Activated T-helper 2 cell treated with anti-CD3 and anti-CD28 coated beads, Interferon-gamma antibody, Interleukin-2, Interleukin-4, amounts not matched to agents 10 μg/mL and 5 μg/mL and 100 μg/mL, durations not matched to agents 14 hours and 24 hours and 36 hours (primary cell): ENCODE measurements at regions of chr1 and their contacts with region 1.

Region 1: GRCh38 chr1:185566995-185567394 is 167.2 kb upstream of the HMCN1 start:
- DNase-seq: peak; percentile 36
- H3K4me3 Mint-ChIP-seq: no peak overlapping the region
- H3K27ac Mint-ChIP-seq: peak overlapping the region; percentile 75
- H3K4me1 Mint-ChIP-seq: peaks cover 63% of the 10 kb centered on the region
- H3K27me3 Mint-ChIP-seq: no peaks in the 10 kb centered on the region

Region 2: GRCh38 chr1:184881941-184882913 is 684.8 kb before region 1 on chr1:
- intact Hi-C with region 1: loop called (anchors 1 kb)
- DNase-seq: no peak
- H3K4me3 Mint-ChIP-seq: peak overlapping the region; percentile 1
- H3K27ac Mint-ChIP-seq: peak overlapping the region; percentile 90
- H3K4me1 Mint-ChIP-seq: peaks cover 31% of the 10 kb centered on the region
- H3K27me3 Mint-ChIP-seq: peaks cover 5% of the 10 kb centered on the region

Region 3: GRCh38 chr1:185244015-185244747 is 322.8 kb before region 1 on chr1:
- intact Hi-C with region 1: loop called (anchors 5 kb)
- DNase-seq: no peak
- H3K4me3 Mint-ChIP-seq: no peak overlapping the region
- H3K27ac Mint-ChIP-seq: no peak overlapping the region
- H3K4me1 Mint-ChIP-seq: peaks cover 18% of the 10 kb centered on the region
- H3K27me3 Mint-ChIP-seq: no peaks in the 10 kb centered on the region

Region 4: DNA sequence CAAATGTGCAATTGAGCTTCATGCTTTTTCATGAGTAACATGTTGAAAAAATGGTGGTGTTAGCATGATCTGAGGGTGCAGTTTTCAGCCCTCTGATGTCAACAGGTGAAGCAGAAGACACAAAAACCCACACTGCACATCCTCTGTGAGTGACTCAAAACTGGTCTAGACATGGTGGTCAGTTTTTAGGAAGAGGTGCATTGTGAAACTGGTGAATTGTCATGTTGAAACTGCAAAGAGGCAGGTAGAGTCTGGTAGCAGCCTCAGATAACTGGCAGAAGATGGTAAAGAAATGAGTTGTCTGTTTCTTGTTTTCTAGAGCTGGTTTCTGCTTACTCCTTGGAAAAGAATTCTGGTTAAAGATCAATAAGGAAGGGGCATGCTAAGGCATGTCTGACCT is 69.9 kb after region 1 on chr1:
- intact Hi-C with region 1: loop called (anchors 1 kb)
- DNase-seq: peak; percentile 56
- H3K4me3 Mint-ChIP-seq: no peak overlapping the region
- H3K27ac Mint-ChIP-seq: peak overlapping the region; percentile 79
- H3K4me1 Mint-ChIP-seq: peaks cover 22% of the 10 kb centered on the region
- H3K27me3 Mint-ChIP-seq: no peaks in the 10 kb centered on the region

Region 5: GRCh38 chr1:185663332-185663731 is 96.3 kb after region 1 on chr1:
- intact Hi-C with region 1: loop called (anchors 2 kb)
- DNase-seq: no peak
- H3K4me3 Mint-ChIP-seq: no peak overlapping the region
- H3K27ac Mint-ChIP-seq: no peak overlapping the region
- H3K4me1 Mint-ChIP-seq: peaks cover 15% of the 10 kb centered on the region
- H3K27me3 Mint-ChIP-seq: no peaks in the 10 kb centered on the region